GM18951 (cell line): ENCODE measurements at regions of chr3 and their contacts with region 1.

Region 1: GRCh38 chr3:46488735-46489361 is 8.9 kb upstream of the RTP3 start:
- POLR2A ChIP-seq: no peak

Region 2: DNA sequence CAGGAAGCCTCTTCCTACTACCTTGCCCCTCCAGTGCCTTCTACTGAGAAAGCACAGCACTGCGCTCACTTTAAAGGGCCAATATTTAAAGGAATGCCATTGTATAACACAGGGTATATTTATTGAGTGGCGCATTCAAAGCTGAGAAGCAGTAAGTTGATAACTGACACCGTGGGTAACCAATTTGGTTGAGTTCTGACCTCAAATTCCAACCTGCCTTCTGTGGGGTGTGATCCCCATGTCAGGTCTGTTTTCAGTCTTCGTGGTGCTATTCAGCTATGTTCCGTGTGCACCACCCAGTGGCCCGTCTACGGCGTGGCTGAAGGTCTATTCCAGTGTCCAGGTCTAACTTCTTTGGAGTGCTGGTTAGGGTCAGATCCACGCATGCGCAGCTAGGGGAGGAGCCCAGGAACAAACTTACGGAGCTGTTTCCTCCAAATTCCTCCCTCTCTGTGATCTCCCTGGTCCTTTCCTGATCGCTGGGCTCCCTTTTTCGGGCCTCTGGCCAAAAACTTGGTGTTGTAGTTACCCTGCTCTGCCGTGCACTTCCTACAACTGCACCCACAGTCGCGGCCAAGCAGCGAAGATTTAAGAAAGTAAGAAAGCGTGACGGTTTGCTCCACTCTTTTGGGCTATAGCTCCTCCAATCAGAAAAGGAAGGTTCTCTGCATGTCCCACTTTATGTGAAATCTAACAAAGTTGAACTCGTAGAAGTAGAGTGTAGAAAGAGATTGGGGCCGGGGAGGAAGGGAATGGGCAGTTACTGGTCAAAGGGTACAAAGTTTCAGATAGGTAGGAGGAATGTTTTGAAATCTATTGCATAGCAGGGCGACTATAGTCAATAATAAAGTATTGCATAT is 69.6 kb after region 1 on chr3:
- in situ Hi-C with region 1: loop called (anchors 5 kb)
- POLR2A ChIP-seq: peak; percentile 44

Region 3: GRCh38 chr3:46634856-46635255 is 146.0 kb after region 1 on chr3:
- in situ Hi-C with region 1: loop called (anchors 5 kb)
- POLR2A ChIP-seq: no peak